Motor neuron (in vitro differentiated cells): ENCODE measurements at regions of chr1 and their contacts with region 1.

Region 1: DNA sequence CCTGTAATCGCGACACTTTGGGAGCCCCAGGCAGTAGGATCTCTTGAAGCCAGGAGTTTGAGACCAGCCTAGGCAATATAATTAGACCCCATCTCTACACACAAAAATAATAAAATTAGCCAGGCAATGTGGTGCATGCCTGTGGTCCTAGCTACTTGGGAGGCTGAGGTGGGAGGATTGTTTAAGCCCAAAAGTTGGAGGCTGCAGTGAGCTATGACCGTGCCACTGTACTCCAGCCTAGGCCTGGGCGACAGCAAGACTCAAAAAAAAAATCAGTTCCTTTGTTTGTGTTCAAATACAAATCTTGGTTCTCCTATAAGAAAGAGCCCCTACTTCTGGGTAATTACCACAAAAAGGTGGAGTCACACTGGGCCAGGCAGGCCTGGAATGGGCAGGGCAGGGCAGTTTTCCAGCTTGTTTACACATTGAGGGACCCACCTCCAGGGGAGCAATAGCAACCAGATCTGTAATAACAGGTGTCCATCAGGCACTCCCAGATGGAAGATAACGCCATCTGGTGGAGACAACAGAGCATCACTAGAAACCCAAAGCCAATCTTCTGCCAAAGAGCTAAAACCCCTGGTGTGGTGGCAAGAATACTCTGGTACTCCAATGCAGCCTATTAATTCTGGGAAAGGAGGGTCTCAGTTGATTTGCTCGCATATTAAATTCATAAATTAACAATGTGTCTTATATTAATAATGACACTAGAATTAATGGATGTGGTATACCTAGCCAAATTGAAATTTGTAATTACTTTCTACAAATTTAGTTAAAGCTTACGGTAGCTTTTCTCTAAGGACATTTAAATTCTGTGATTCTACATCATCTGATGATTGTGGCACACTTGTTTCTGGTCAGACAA is 13.2 kb downstream of the PPP1R15B start:
- ATAC-seq: peak; percentile 64 to 97 (median 78)
- H3K4me3 ChIP-seq: no peak overlapping the region
- H3K27ac ChIP-seq: no peak overlapping the region
- H3K4me1 ChIP-seq: no peaks in the 10 kb centered on the region

Region 2: GRCh38 chr1:203463469-203464062 is 934.9 kb before region 1 on chr1:
- in situ Hi-C with region 1: no loop called
- ATAC-seq: peak; percentile 41 to 91 (median 82)
- H3K4me3 ChIP-seq: no peak overlapping the region
- H3K27ac ChIP-seq: peak overlapping the region; percentile 24 to 74
- H3K4me1 ChIP-seq: peaks cover 25 to 28% of the 10 kb centered on the region in 2 donors

Region 3: DNA sequence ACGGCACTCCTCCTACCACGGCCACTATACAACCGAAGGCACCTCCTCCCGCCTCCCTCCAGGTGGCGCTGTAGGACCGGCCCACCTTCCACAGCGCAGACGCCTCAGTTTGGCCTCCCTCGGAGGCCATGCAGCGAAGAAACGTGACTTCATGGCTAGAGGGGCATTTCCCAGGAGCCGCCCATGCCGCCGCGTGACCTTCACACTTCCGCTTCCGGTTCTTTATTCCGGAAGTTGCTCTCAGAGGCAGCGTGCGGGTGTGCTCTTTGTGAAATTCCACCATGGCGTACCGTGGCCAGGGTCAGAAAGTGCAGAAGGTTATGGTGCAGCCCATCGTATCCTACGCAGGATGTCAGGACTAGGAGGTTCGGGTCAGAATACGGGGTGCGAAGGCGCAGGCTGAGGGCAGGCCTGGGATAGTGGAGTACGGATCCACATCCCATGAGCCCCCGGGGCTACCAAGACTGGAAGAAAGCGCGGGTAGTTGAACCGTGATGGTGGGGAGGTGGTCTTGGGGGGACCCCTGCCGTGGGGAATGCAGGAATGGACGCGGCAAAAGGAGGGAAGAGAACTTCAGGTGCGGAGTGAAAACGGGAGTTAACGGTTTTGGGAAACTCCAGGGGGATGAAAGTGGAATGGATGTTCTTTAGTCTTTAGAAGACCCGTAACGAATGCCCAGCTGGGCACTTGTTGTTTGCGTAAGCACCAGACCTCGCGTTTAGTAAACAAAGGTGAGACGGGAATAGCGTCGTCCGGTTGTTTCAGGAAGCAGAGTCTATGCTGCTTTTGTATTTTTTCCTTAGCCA is 536.9 kb before region 1 on chr1 and contains the start of gene SNRPE:
- in situ Hi-C with region 1: loop called in 5 of 9 experiments (anchors 25 kb)
- ATAC-seq: peak; percentile 89 to 99 (median 96)
- H3K4me3 ChIP-seq: peak within 1 kb of the TSS; percentile 72 to 84 (median 78)
- H3K27ac ChIP-seq: peak within 1 kb of the TSS; percentile 72 to 85
- H3K4me1 ChIP-seq: peaks cover 6 to 10% of the 10 kb centered on the region in 2 donors
- total RNA-seq, gene SNRPE: 104 to 392 (median 191) TPM

Region 4: GRCh38 chr1:204213668-204214662 is 184.5 kb before region 1 on chr1 and contains the start of gene GOLT1A:
- in situ Hi-C with region 1: loop called in 1 of 9 experiments (anchors 25 kb)
- ATAC-seq: peak; percentile 73 to 96 (median 88)
- H3K4me3 ChIP-seq: peak within 1 kb of the TSS in 3 of 5 donors; percentile 4 to 6 (median 5)
- H3K27ac ChIP-seq: peak within 1 kb of the TSS in 1 of 2 donors; percentile 3
- H3K4me1 ChIP-seq: peaks cover 0 to 12% of the 10 kb centered on the region in 2 donors
- total RNA-seq, gene GOLT1A: 0.46 to 2.3 (median 0.54) TPM in 6 of 8 experiments, not detected in the others